PC-3 (cell line): ENCODE measurements at regions of chr13 and their contacts with region 1.

Region 1: GRCh38 chr13:88622362-88622973 is 951.3 kb downstream of the SLITRK5 start:
- DNase-seq: no peak
- ATAC-seq: no peak
- H3K4me3 ChIP-seq: no peak overlapping the region
- H3K27ac ChIP-seq: no peak overlapping the region
- H3K4me1 ChIP-seq: no peaks in the 10 kb centered on the region
- H3K27me3 ChIP-seq: no peaks in the 10 kb centered on the region
- CTCF ChIP-seq: no peak

Region 2: DNA sequence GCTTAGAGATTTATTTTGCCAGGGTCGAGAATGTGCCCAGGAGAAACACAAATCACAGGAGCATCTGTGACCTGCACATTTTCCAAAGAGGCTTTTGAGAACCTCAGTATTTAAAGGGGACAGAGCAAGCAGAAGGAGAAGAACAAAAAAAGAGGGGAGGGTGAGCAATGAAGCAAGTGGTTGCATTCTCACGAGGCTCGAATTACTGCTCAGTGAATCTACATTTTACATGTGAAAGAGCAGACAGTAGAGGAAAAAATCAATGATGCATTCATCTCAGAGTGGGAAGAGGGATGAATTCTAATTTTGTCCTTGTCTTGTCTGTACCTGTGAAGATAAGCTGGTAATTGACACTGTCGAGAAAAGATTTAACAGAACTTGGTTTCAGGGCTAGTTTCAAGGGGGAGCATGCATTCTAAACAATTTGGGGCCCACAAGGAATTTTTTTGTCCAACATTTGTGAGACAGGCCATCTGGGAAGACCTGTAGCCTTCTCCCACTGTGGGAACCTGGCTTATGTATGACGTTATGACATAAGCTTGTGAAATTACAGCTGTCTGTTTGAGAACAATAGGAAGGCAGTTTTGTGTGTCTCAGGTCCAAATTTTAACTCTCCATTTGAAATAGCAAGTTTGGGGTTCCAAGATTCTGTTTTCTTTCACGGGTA is 96.1 kb before region 1 on chr13:
- CTCF ChIA-PET with region 1: no interaction called
- POLR2A ChIA-PET with region 1: no interaction called
- intact Hi-C with region 1: no loop called
- DNase-seq: no peak
- ATAC-seq: no peak
- H3K4me3 ChIP-seq: no peak overlapping the region
- H3K27ac ChIP-seq: no peak overlapping the region
- H3K4me1 ChIP-seq: no peaks in the 10 kb centered on the region
- H3K27me3 ChIP-seq: no peaks in the 10 kb centered on the region
- CTCF ChIP-seq: no peak

Region 3: GRCh38 chr13:88637935-88638334 is 15.5 kb after region 1 on chr13:
- CTCF ChIA-PET with region 1: no interaction called
- POLR2A ChIA-PET with region 1: no interaction called
- intact Hi-C with region 1: no loop called
- DNase-seq: no peak
- ATAC-seq: no peak
- H3K4me3 ChIP-seq: no peak overlapping the region
- H3K27ac ChIP-seq: no peak overlapping the region
- H3K4me1 ChIP-seq: no peaks in the 10 kb centered on the region
- H3K27me3 ChIP-seq: no peaks in the 10 kb centered on the region
- CTCF ChIP-seq: no peak

Region 4: GRCh38 chr13:88685459-88685858 is 63.0 kb after region 1 on chr13:
- CTCF ChIA-PET with region 1: no interaction called
- POLR2A ChIA-PET with region 1: no interaction called
- intact Hi-C with region 1: no loop called
- DNase-seq: no peak
- ATAC-seq: no peak
- H3K4me3 ChIP-seq: no peak overlapping the region
- H3K27ac ChIP-seq: no peak overlapping the region
- H3K4me1 ChIP-seq: no peaks in the 10 kb centered on the region
- H3K27me3 ChIP-seq: no peaks in the 10 kb centered on the region
- CTCF ChIP-seq: no peak

Region 5: DNA sequence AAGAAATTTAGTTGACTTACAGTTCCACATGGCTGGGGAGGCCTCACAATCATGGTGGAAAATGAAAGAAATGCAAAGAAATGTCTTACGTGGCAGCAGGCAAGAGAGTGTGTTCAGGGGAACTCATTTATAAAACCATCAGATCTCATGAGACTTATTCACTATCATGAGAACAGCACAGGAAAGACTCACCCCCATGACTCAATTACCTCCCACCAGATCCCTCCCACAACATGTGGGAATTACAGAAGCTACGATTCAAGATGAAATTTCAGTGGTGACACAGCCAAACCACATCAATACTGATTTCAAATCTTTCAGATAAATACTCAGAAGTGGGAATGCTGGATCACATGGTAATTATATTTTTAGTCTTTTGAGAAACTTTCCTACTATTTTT is 406.6 kb after region 1 on chr13:
- CTCF ChIA-PET with region 1: no interaction called
- POLR2A ChIA-PET with region 1: no interaction called
- intact Hi-C with region 1: no loop called
- DNase-seq: no peak
- ATAC-seq: no peak
- H3K4me3 ChIP-seq: no peak overlapping the region
- H3K27ac ChIP-seq: no peak overlapping the region
- H3K4me1 ChIP-seq: no peaks in the 10 kb centered on the region
- H3K27me3 ChIP-seq: no peaks in the 10 kb centered on the region
- CTCF ChIP-seq: no peak

Region 6: DNA sequence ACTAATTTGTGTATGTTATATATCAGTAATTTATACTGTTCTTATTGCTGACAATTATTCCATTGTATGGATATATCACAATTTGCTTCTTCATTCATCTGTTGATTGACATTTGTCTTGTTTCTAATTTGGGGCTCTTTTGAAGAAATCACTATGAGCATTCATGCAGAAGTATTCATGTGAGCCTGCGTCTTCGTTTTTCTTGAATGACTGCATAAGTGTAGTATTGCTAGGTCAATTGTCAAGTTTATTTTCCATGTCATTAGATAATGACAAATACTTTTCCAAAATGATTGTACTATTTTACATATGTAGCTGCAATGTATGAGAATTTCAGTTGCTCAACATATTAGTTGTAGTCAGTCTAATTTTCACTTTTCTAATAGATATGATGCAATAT is 845.6 kb after region 1 on chr13:
- CTCF ChIA-PET with region 1: no interaction called
- POLR2A ChIA-PET with region 1: interaction called, 20 read pairs
- intact Hi-C with region 1: no loop called
- DNase-seq: no peak
- ATAC-seq: no peak
- H3K4me3 ChIP-seq: no peak overlapping the region
- H3K27ac ChIP-seq: no peak overlapping the region
- H3K4me1 ChIP-seq: no peaks in the 10 kb centered on the region
- H3K27me3 ChIP-seq: no peaks in the 10 kb centered on the region
- CTCF ChIP-seq: no peak